Naive thymus-derived CD4-positive, alpha-beta T cell (primary cell): ENCODE measurements at regions of chr16 and their contacts with region 1.

Region 1: GRCh38 chr16:28846080-28846932 is at the start of gene TUFM:
- DNase-seq: peak; percentile 88 to 99 (median 98)
- ATAC-seq: peak; percentile 98
- H3K4me3 ChIP-seq: peak within 1 kb of the TSS; percentile 88
- H3K4me3 Mint-ChIP-seq: peak within 1 kb of the TSS; percentile 91 to 98 (median 96)
- H3K27ac ChIP-seq: peak within 1 kb of the TSS; percentile 94
- H3K27ac Mint-ChIP-seq: peak within 1 kb of the TSS; percentile 91 to 98 (median 94)
- H3K4me1 ChIP-seq: peaks cover 19 to 25% of the 10 kb centered on the region in 2 donors
- H3K4me1 Mint-ChIP-seq: peaks cover 17 to 38% (median 27%) of the 10 kb centered on the region in 7 donors
- H3K27me3 ChIP-seq: no peaks in the 10 kb centered on the region
- H3K27me3 Mint-ChIP-seq: no peaks in the 10 kb centered on the region
- total RNA-seq, gene TUFM: 89.7 to 140 (median 95.2) TPM

Region 2: GRCh38 chr16:28491970-28492474 is 354.3 kb before region 1 on chr16 and contains the start of gene CLN3:
- CTCF ChIA-PET with region 1: no interaction called
- POLR2A ChIA-PET with region 1: no interaction called
- intact Hi-C with region 1: loop called (anchors 1 to 10 kb)
- DNase-seq: peak; percentile 73 to 95 (median 93)
- ATAC-seq: peak; percentile 78
- H3K4me3 ChIP-seq: peak within 1 kb of the TSS; percentile 98
- H3K4me3 Mint-ChIP-seq: peak within 1 kb of the TSS; percentile 95 to 100 (median 98)
- H3K27ac ChIP-seq: peak within 1 kb of the TSS; percentile 95
- H3K27ac Mint-ChIP-seq: peak within 1 kb of the TSS; percentile 99 to 100 (median 100)
- H3K4me1 ChIP-seq: peaks cover 31 to 40% of the 10 kb centered on the region in 2 donors
- H3K4me1 Mint-ChIP-seq: peaks cover 41 to 77% (median 62%) of the 10 kb centered on the region in 7 donors
- H3K27me3 ChIP-seq: no peaks in the 10 kb centered on the region
- H3K27me3 Mint-ChIP-seq: no peaks in the 10 kb centered on the region
- total RNA-seq, gene CLN3: 56.5 to 76.3 (median 70.7) TPM

Region 3: GRCh38 chr16:28834873-28835865 is 11.1 kb before region 1 on chr16:
- CTCF ChIA-PET with region 1: interaction called, 4 read pairs
- POLR2A ChIA-PET with region 1: interaction called, 10 read pairs
- intact Hi-C with region 1: no loop called
- DNase-seq: peak in 1 of 9 donors; percentile 8
- ATAC-seq: no peak
- H3K4me3 ChIP-seq: no peak overlapping the region
- H3K4me3 Mint-ChIP-seq: peak overlapping the region in 2 of 10 donors; percentile 18 to 37
- H3K27ac ChIP-seq: no peak overlapping the region
- H3K27ac Mint-ChIP-seq: peak overlapping the region in 4 of 9 donors; percentile 15 to 54 (median 37)
- H3K4me1 ChIP-seq: no peaks in the 10 kb centered on the region
- H3K4me1 Mint-ChIP-seq: peaks cover 0 to 16% (median 11%) of the 10 kb centered on the region in 7 donors
- H3K27me3 ChIP-seq: no peaks in the 10 kb centered on the region
- H3K27me3 Mint-ChIP-seq: no peaks in the 10 kb centered on the region

Region 4: GRCh38 chr16:28879841-28880588 is 33.7 kb after region 1 on chr16:
- CTCF ChIA-PET with region 1: no interaction called
- POLR2A ChIA-PET with region 1: interaction called, 3 read pairs
- intact Hi-C with region 1: loop called (anchors 1 kb)
- DNase-seq: peak; percentile 64 to 89 (median 78)
- ATAC-seq: peak; percentile 99
- H3K4me3 ChIP-seq: peak overlapping the region; percentile 92
- H3K4me3 Mint-ChIP-seq: peak overlapping the region; percentile 82 to 93 (median 88)
- H3K27ac ChIP-seq: peak overlapping the region; percentile 69
- H3K27ac Mint-ChIP-seq: peak overlapping the region in 4 of 9 donors; percentile 14 to 70 (median 43)
- H3K4me1 ChIP-seq: peaks cover 0 to 16% of the 10 kb centered on the region in 2 donors
- H3K4me1 Mint-ChIP-seq: peaks cover 0 to 19% (median 15%) of the 10 kb centered on the region in 7 donors
- H3K27me3 ChIP-seq: no peaks in the 10 kb centered on the region
- H3K27me3 Mint-ChIP-seq: peaks cover 3 to 14% (median 9%) of the 10 kb centered on the region in 5 donors

Region 5: DNA sequence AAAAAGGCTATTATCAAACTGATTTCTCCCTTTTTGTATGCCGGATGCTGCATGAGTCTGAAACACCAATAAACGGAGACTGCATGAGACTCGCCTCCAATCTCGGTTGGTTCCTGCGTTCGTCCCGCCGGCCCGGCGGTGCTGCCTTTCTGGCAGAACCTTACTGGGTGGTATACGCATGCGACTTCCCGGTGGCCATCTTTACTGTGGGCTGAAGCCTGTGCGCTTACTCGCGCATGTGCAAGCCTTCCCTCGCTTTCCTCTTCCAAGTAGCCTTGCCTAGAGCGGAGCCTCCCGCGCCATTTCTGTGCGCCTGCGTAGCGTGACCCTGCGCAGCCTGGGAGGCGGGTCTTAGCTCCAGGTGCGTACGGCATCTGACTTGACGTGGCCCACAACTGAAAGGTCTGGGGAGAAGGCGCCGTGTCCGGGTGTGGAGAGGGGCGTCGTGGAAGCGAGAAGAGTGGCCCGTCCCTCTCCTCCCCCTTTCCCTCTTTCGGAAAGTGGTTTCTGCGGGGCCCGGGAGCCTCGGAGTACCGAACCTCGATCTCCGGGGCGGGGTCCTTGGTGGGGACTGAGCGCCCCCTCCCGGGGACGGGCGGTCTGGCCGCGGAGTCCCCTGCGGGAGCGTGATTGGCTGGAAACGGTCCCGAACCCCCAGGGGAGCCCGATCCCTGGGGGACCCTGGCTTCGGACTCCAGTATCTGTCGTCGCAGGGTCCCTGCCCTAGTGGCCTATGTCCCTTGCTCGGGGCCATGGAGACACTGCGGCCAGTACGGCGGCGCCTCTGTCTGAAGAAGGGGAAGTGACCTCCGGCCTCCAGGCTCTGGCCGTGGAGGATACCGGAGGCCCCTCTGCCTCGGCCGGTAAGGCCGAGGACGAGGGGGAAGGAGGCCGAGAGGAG is 969.7 kb after region 1 on chr16 and contains the start of gene PAGR1:
- CTCF ChIA-PET with region 1: no interaction called
- POLR2A ChIA-PET with region 1: no interaction called
- intact Hi-C with region 1: loop called in 1 of 2 experiments (anchors 2 kb)
- DNase-seq: peak; percentile 92 to 99 (median 99)
- ATAC-seq: peak; percentile 87
- H3K4me3 ChIP-seq: peak within 1 kb of the TSS; percentile 99
- H3K4me3 Mint-ChIP-seq: peak within 1 kb of the TSS; percentile 85 to 100 (median 96)
- H3K27ac ChIP-seq: peak within 1 kb of the TSS; percentile 92
- H3K27ac Mint-ChIP-seq: peak within 1 kb of the TSS; percentile 95 to 99 (median 99)
- H3K4me1 ChIP-seq: peaks cover 29 to 41% of the 10 kb centered on the region in 2 donors
- H3K4me1 Mint-ChIP-seq: peaks cover 40 to 75% (median 59%) of the 10 kb centered on the region in 7 donors
- H3K27me3 ChIP-seq: no peaks in the 10 kb centered on the region
- H3K27me3 Mint-ChIP-seq: peaks cover 0 to 22% (median 0%) of the 10 kb centered on the region in 5 donors
- total RNA-seq, gene PAGR1: 17.5 to 42.0 (median 25.7) TPM